ENCODE measurements at regions of chr9 and their contacts with region 1.

Region 1: DNA sequence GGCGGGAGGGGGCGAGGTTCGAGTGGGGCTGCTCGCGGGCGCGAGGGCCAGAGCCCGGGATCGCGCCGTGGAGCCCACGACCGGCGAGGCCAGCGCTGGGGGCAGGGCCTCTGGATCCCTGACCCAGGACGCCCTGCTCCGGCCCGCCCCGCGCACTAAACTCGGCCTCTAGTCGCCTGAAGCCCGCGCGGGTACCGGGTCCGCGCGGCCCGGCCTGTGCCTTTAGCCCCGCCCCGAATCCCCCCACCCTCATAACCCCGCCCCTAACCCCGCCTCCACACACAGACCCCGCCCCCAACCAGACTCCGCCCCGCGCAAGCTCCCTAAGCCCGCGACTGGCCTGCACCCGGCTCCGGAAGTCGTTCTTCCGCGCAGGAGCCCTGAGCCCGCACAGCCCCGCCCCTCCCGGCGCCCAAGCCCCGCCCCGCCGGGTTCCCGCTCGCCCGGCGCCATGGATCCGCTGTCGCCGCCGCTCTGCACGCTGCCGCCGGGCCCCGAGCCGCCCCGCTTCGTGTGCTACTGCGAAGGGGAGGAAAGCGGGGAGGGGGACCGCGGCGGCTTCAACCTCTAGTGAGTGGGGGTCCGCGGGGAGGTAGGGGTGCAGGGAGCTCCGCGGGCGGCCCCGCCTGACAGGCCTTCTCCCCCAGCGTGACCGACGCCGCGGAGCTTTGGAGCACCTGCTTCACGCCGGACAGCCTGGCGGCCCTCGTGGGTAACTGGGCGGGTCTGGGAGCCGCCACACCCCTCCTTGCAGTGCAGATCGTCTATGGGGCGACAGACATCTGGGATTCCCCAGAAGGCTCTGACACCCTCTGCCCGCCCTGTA is at the start of gene PAXX:
- DNase-seq: peak; percentile 99
- H3K4me3 Mint-ChIP-seq: peak within 1 kb of the TSS; percentile 87
- H3K27ac Mint-ChIP-seq: peak within 1 kb of the TSS; percentile 90
- H3K4me1 Mint-ChIP-seq: peaks cover 19% of the 10 kb centered on the region
- H3K27me3 Mint-ChIP-seq: peaks cover 21% of the 10 kb centered on the region
- total RNA-seq, gene PAXX: 87.8 and 90.2 TPM in 2 replicates

Region 2: DNA sequence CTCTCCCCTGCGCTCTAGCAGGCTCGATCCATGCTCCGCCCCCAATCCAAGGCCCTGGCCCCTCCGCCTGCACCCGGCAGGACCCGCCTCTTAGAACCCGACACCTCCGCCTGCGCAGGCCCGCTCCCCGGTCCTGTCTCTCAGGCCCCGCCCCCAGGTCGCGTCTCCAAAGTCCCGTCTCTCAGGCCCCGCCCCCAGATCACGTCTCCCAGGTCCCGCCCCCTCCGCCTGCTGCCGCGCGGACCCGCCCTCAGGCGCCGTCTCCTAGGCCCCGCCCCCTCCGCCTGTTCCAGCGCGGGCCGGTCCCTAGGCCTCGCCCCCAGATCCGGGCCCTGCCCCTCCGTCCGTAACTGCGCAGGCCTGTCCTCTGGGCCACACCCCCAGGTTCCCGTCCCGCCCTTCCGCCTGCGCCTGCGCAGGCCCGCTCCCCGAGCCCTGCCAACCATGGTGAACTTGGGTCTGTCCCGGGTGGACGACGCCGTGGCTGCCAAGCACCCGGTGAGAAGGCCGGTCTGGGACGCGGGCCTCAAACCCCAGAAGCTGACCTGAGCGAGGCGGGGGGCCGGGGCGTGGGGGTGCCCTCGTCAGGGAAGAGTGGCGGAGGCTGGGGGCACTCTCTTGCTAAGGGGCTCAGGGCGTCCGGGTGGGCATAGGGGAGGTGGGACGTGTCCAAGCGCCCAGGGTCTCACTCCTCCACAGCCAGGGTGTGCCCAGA is 201.1 kb before region 1 on chr9 and contains the start of gene TMEM141:
- intact Hi-C with region 1: loop called (anchors 1 kb)
- DNase-seq: peak; percentile 100
- H3K4me3 Mint-ChIP-seq: peak within 1 kb of the TSS; percentile 87
- H3K27ac Mint-ChIP-seq: peak within 1 kb of the TSS; percentile 91
- H3K4me1 Mint-ChIP-seq: peaks cover 26% of the 10 kb centered on the region
- H3K27me3 Mint-ChIP-seq: peaks cover 16% of the 10 kb centered on the region
- total RNA-seq, gene TMEM141: 36.1 and 40.1 TPM in 2 replicates

Region 3: DNA sequence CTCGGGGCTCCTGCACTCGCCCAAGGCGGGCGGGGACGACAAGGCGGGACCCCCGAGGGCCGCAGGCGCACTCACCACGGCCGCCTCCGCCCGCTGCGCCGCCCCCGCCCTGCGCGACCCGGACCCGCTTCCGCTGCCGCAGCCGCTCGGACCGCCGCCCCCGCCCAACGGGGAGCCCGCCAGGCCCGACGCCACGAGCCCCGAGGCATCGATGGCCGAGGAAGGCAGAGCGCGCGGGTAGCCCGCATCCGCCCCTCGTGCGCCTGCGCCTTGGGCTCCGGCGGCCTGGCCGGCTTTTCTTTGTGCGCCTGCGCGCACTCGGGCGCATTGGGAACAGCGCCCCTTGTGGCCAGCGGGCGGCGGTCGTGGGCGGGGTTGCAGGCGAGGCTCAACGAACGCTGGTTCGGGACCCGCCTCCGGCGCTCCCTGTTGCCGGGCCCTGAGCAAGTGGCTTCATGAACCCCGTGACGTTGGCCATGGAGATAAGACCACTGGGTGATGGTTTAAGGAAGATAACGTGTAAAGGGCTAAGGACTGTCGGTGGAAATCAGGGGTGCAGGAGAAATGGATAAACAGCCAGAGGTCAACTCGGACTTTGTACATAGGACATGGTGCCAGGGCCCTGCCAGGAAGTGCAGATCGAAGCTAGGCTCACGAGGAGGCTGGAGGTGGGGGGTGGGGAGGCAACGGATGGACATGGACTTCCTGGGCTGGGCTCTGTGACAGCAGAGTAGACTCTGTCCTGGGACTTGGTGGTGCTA is 47.5 kb before region 1 on chr9 and contains the starts of genes C8G and FBXW5:
- intact Hi-C with region 1: loop called (anchors 1 kb)
- DNase-seq: peak; percentile 99
- H3K4me3 Mint-ChIP-seq: peak within 1 kb of the TSS; percentile 83
- H3K27ac Mint-ChIP-seq: peak within 1 kb of the TSS; percentile 87
- H3K4me1 Mint-ChIP-seq: peaks cover 3% of the 10 kb centered on the region
- H3K27me3 Mint-ChIP-seq: no peaks in the 10 kb centered on the region
- total RNA-seq, gene C8G: 0.69 and 1.7 TPM in 2 replicates
- total RNA-seq, gene FBXW5: 92.7 and 93.6 TPM in 2 replicates

Region 4: DNA sequence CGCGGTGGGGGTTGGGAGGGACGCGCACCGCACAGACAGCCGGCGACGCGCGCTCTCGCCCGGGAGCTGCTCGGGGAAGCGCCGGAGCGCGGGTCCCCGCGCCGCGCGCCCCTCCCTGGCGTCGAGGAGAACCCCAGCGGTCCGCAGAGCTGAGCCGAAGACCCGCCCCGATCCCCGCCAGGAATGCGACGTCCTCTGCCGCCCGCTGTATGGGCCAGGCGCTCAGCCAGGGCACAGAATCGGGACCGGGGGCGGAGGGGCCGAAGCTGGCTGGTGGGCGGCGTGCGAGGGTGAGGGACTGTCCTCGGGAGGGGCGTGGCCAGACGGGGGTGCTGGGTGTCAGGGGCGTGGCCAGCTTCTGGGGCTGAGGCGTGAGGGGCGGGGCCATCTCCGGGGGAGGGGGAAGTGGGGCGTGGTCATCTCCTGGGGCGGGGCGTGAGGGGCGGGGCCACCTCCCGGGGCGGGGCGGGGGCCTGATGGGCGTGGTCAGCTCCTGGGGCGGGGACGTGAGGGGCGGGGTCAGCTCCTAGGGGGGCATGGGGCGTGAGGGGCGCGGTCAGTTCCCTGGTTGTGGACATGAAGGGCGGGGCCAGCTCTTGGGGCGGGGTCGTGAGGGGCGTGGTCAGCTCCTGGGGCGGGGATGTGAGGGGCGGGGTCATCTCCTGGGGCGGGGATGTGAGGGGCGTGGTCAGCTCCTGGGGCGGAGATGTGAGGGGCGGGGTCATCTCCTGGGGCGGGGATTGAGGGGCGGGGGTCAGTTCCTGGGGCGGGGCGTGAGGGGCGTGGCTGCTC is 13.9 kb before region 1 on chr9:
- intact Hi-C with region 1: loop called (anchors 2 kb)
- DNase-seq: peak; percentile 91
- H3K4me3 Mint-ChIP-seq: no peak overlapping the region
- H3K27ac Mint-ChIP-seq: no peak overlapping the region
- H3K4me1 Mint-ChIP-seq: peaks cover 7% of the 10 kb centered on the region
- H3K27me3 Mint-ChIP-seq: peaks cover 5% of the 10 kb centered on the region

Region 5: GRCh38 chr9:137021979-137022619 is 29.9 kb after region 1 on chr9:
- intact Hi-C with region 1: loop called (anchors 1 kb)
- DNase-seq: peak; percentile 91
- H3K4me3 Mint-ChIP-seq: no peak overlapping the region
- H3K27ac Mint-ChIP-seq: no peak overlapping the region
- H3K4me1 Mint-ChIP-seq: peaks cover 6% of the 10 kb centered on the region
- H3K27me3 Mint-ChIP-seq: no peaks in the 10 kb centered on the region

Region 6: GRCh38 chr9:137034863-137035761 is 42.9 kb after region 1 on chr9:
- intact Hi-C with region 1: loop called (anchors 2 kb)
- DNase-seq: peak; percentile 95
- H3K4me3 Mint-ChIP-seq: peak overlapping the region; percentile 80
- H3K27ac Mint-ChIP-seq: peak overlapping the region; percentile 83
- H3K4me1 Mint-ChIP-seq: peaks cover 31% of the 10 kb centered on the region
- H3K27me3 Mint-ChIP-seq: peaks cover 2% of the 10 kb centered on the region

Measured in activated CD4-positive, alpha-beta T cell treated with anti-CD3 and anti-CD28 coated beads, Interleukin-2, amount 10 ng/mL, durations not matched to agents 24 days and 14 days (primary cell).